ENCODE measurements at regions of chr20 and their contacts with region 1.

Region 1: GRCh38 chr20:47356526-47357295 is at the start of gene ZMYND8:
- DNase-seq: peak; percentile 87
- ATAC-seq: peak; percentile 67 to 71
- total RNA-seq, gene ZMYND8: 22.6 to 27.5 TPM

Region 2: DNA sequence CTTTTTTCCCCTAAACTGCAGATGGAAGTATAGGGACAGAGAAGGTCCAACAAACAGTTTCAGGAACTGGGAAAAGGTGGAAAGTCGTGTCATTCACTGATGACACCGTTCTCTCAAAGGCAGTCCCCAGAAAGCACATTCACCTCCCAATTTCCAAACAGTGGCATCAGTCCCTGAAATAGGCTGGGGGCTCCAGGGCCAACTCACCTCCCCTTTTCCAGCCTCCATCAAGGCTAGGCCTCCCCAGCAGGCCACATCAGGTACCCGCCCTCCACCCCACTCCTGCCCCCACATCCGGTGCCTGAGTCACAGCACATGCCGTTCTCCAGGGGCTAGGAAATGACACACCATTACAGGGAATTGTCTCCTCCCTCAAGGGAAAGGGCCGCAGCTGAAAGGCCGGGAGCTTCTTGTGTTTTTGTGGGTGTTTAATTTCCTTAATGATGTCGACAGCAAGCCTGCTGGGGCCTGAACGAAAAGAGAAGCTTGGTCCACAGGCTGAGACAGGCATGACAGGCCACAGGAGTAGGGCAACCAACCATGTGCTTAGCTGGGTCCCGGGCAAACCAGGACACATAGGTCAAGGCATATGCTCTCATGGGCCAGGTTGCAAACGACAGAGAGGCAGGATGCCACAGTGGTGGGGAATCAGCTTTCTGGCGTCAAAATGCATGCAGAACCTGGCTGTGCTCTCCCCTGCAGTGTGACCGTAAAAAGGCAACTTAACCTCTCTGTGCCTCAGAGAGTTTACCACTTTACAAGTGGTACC is 39.4 kb before region 1 on chr20:
- intact Hi-C with region 1: loop called (anchors 2 to 5 kb)
- DNase-seq: peak; percentile 90
- ATAC-seq: peak; percentile 60 to 82

Region 3: DNA sequence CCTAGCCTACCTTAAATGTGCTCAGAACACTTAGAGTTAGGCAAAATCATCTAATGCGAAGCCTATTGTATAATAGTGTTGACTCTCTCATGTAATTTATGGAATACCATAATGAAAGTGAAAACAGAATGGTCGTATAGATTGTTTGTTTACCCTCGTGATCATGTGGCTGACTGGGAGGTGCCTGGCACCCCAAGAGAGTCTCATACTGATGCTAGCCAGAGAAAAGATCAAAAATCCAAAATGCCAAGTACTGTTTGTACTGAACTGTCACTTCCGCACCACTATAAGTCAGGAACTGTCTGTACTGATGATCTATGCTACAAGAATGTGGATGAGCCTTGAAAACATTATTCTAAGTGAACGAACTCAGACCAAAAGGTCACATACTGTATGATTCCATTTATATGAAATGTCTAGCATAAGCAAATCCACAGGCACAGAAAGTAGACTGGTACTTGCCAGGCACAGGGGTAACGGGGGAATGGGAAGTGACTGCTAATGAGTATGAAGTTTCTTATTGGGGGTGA is 22.6 kb before region 1 on chr20:
- intact Hi-C with region 1: loop called in 1 of 2 experiments (anchors 2 kb)
- DNase-seq: no peak
- ATAC-seq: peak; percentile 56 to 75

Measured in left cardiac atrium (tissue), 4 donors.